Activated CD4-positive, alpha-beta T cell treated with anti-CD3 and anti-CD28 coated beads, Interleukin-2, amount 10 ng/mL, durations not matched to agents 7 days and 5 days (primary cell): ENCODE measurements at regions of chr15 and their contacts with region 1.

Region 1: DNA sequence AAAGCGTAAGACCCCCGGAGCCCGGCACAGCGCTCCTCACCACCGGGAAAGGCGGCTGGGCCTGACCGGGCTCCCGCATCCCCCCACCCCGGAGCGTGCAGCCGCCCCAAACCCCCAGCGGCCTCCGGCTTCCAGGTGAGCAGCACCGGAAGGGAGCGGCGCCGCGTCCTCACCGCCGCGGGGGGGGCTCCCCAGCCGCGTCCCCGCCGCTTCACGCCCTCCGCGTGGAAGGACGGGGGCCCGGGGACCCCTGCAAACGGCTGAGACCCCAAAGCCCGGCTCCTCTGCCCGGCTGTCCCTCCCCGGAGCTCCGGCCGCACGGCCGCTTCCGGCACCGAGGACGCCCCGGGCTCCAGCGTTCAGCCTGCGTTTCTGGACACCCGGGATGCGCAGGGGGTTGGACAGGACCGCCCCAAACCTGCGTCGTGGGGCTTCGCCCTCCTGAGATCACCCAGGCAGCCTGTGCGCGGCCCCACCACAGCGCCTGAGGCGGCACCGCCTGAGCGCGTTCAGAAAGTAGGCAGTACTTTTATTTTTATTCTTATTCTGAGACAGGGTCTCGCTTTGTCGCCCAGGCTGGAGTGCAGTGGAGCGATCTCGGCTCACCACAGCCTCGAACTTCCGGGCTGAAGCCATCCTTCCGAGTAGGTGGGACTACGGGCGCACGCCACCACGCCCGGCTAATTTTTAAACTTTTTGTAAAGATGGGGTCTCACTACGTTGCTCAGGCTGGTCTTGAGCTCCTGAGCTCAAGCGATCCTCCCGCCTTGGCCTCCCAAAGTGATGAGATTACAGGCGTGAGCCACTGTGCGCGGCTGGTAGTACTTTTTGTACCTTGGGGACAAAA is 51.6 kb upstream of the BLM start:
- DNase-seq: peak; percentile 72
- H3K4me3 Mint-ChIP-seq: peak overlapping the region; percentile 79
- H3K27ac Mint-ChIP-seq: peak overlapping the region; percentile 95
- H3K4me1 Mint-ChIP-seq: peaks cover 74% of the 10 kb centered on the region
- H3K27me3 Mint-ChIP-seq: peaks cover 9% of the 10 kb centered on the region

Region 2: DNA sequence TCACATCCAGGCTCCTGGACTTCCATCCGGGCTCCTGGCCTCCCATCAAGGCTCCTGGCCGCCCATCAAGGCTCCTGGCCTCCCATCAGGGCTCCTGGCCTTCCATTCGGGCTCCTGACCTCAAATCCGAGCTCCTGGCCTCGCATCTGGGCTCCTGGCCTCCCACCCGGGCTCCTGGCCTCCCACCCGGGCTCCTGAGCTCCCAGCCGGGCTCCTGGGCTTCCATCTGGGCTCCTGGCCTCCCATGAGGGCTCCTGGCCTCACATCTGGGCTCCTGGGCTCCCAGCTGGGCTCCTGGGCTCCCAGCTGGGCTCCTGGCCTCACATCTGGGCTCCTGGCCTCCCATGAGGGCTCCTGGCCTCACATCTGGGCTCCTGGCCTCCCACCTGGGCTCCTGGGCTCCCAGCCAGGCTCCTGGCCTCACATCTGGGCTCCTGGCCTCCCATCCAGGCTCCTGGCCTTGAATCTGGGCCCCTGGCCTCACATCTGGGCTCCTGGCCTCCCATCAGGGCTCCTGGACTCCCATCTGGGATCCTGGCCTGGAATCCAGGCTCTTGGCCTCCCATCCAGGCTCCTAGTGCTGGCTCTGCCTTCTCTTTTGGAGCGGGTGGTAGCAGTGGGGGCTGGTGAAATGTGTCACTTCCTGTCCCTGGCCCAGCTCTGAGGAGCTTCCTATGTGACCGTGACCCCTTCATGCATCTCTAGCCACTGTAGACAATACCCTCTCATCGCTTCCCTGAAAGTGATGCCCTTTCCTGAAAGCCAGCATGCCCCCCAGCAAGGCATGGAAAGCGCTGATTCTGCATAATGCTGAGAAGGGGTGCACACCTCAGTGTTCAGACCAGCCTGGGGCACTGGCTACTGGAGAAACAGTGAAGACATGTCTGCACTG is 11.0 kb before region 1 on chr15:
- CTCF ChIA-PET with region 1: interaction called, 24 read pairs
- POLR2A ChIA-PET with region 1: no interaction called
- DNase-seq: no peak
- H3K4me3 Mint-ChIP-seq: no peak overlapping the region
- H3K27ac Mint-ChIP-seq: peak overlapping the region; percentile 62
- H3K4me1 Mint-ChIP-seq: peaks cover 65% of the 10 kb centered on the region
- H3K27me3 Mint-ChIP-seq: peaks cover 12% of the 10 kb centered on the region

Region 3: GRCh38 chr15:90677807-90678790 is 12.6 kb after region 1 on chr15:
- CTCF ChIA-PET with region 1: interaction called, 13 read pairs
- POLR2A ChIA-PET with region 1: no interaction called
- DNase-seq: peak; percentile 62
- H3K4me3 Mint-ChIP-seq: peak overlapping the region; percentile 57
- H3K27ac Mint-ChIP-seq: peak overlapping the region; percentile 92
- H3K4me1 Mint-ChIP-seq: peaks cover 57% of the 10 kb centered on the region
- H3K27me3 Mint-ChIP-seq: peaks cover under 1% of the 10 kb centered on the region